ENCODE measurements at regions of chr3 and their contacts with region 1.

Region 1: GRCh38 chr3:115147329-115148141 is 447 bp upstream of the ZBTB20 start:
- DNase-seq: peak; percentile 83 to 99 (median 98)
- ATAC-seq: peak; percentile 77
- H3K4me3 Mint-ChIP-seq: peak overlapping the region; percentile 86 to 100 (median 98)
- H3K27ac Mint-ChIP-seq: peak overlapping the region; percentile 99 to 100 (median 100)
- H3K4me1 Mint-ChIP-seq: peaks cover 8 to 38% (median 30%) of the 10 kb centered on the region in 4 donors
- H3K27me3 Mint-ChIP-seq: no peaks in the 10 kb centered on the region

Region 2: GRCh38 chr3:113696658-113697499 is 1450.7 kb before region 1 on chr3:
- POLR2A ChIA-PET with region 1: interaction called, 10 read pairs
- DNase-seq: peak; percentile 94 to 100 (median 99)
- ATAC-seq: peak; percentile 80 to 84
- H3K4me3 Mint-ChIP-seq: no peak overlapping the region
- H3K27ac Mint-ChIP-seq: no peak overlapping the region
- H3K4me1 Mint-ChIP-seq: peaks cover 16 to 34% (median 29%) of the 10 kb centered on the region in 4 donors
- H3K27me3 Mint-ChIP-seq: no peaks in the 10 kb centered on the region

Region 3: GRCh38 chr3:115099986-115100571 is 47.5 kb before region 1 on chr3:
- POLR2A ChIA-PET with region 1: interaction called, 61 read pairs
- DNase-seq: peak in 8 of 10 donors; percentile 11 to 67 (median 48)
- ATAC-seq: peak; percentile 87 to 90
- H3K4me3 Mint-ChIP-seq: peak overlapping the region; percentile 83 to 95 (median 90)
- H3K27ac Mint-ChIP-seq: peak overlapping the region; percentile 85 to 98 (median 92)
- H3K4me1 Mint-ChIP-seq: peaks cover 20 to 71% (median 40%) of the 10 kb centered on the region in 4 donors
- H3K27me3 Mint-ChIP-seq: no peaks in the 10 kb centered on the region

Region 4: GRCh38 chr3:115165701-115166100 is 18.2 kb after region 1 on chr3:
- POLR2A ChIA-PET with region 1: interaction called, 55 read pairs
- DNase-seq: peak in 4 of 10 donors; percentile 19 to 45 (median 36)
- ATAC-seq: peak; percentile 60 to 71
- H3K4me3 Mint-ChIP-seq: peak overlapping the region in 5 of 10 donors; percentile 10 to 78 (median 70)
- H3K27ac Mint-ChIP-seq: peak overlapping the region; percentile 65 to 97 (median 89)
- H3K4me1 Mint-ChIP-seq: peaks cover 16 to 30% (median 29%) of the 10 kb centered on the region in 4 donors
- H3K27me3 Mint-ChIP-seq: no peaks in the 10 kb centered on the region

Region 5: GRCh38 chr3:115783938-115784738 is 636.6 kb after region 1 on chr3:
- POLR2A ChIA-PET with region 1: interaction called, 21 read pairs
- DNase-seq: peak; percentile 88 to 96 (median 92)
- ATAC-seq: peak; percentile 87
- H3K4me3 Mint-ChIP-seq: peak overlapping the region; percentile 76 to 97 (median 88)
- H3K27ac Mint-ChIP-seq: peak overlapping the region; percentile 89 to 99 (median 98)
- H3K4me1 Mint-ChIP-seq: peaks cover 9 to 18% (median 13%) of the 10 kb centered on the region in 4 donors
- H3K27me3 Mint-ChIP-seq: peaks cover 0 to 2% (median 0%) of the 10 kb centered on the region in 5 donors

Measured in naive thymus-derived CD8-positive, alpha-beta T cell (primary cell).